Dendritic cell treated with granulocyte-macrophage colony-stimulating factor and Interleukin-4, amounts not matched to agents 40 ng/mL and 50 ng/mL, for 4 days (primary cell): ENCODE measurements at regions of chr10 and their contacts with region 1.

Region 1: GRCh38 chr10:71212318-71213126 is at the start of gene UNC5B:
- H3K4me3 Mint-ChIP-seq: peak within 1 kb of the TSS; percentile 76
- H3K27ac Mint-ChIP-seq: peak within 1 kb of the TSS; percentile 21
- H3K4me1 Mint-ChIP-seq: peaks cover 42% of the 10 kb centered on the region
- H3K27me3 Mint-ChIP-seq: peaks cover 77% of the 10 kb centered on the region

Region 2: DNA sequence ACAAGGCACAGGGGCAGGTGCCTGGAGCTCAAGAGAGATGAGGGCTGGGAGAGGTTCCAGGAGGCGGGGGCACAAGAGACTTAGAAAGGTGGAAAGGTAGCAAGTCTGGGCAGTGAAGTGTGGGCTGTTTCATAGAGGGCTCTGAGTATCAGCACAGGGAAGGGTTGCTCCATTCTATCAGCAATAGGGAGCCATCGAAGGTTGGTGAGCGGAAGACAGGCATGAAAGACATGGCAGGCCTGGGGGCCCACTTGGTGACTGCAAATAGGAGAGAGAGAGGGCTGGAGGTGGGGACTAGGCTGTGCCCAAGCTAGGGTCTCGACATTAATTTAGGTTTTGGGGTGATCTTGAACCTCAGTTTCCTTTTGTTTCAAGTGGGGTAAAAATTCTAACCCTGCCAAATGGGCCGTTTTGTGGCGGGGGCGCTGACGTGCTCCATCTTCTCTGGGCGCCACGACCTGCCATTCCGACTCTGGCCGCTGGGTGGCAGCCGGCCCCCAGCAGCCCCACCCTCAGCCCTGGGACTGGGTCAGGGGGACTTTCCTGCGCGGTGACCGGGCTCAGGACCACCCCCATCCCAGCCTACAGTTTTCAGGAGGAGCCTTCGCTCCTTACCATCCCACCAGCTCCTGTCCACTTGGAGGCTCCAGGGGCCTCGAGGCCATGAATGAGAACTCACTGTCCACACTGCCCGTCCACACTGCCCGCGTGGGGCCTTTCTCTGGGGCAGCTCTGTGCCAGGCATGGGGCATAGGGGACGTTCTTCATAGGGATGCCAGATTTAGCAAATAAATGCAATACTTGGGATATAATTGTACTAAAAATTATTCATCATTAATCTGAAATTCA is 286.9 kb before region 1 on chr10:
- intact Hi-C with region 1: loop called (anchors 2 kb)
- H3K4me3 Mint-ChIP-seq: no peak overlapping the region
- H3K27ac Mint-ChIP-seq: peak overlapping the region; percentile 13
- H3K4me1 Mint-ChIP-seq: peaks cover 15% of the 10 kb centered on the region
- H3K27me3 Mint-ChIP-seq: peaks cover 10% of the 10 kb centered on the region

Region 3: GRCh38 chr10:71234970-71235685 is 22.6 kb after region 1 on chr10:
- intact Hi-C with region 1: loop called (anchors 2 kb)
- H3K4me3 Mint-ChIP-seq: no peak overlapping the region
- H3K27ac Mint-ChIP-seq: peak overlapping the region; percentile 60
- H3K4me1 Mint-ChIP-seq: peaks cover 67% of the 10 kb centered on the region
- H3K27me3 Mint-ChIP-seq: peaks cover under 1% of the 10 kb centered on the region

Region 4: DNA sequence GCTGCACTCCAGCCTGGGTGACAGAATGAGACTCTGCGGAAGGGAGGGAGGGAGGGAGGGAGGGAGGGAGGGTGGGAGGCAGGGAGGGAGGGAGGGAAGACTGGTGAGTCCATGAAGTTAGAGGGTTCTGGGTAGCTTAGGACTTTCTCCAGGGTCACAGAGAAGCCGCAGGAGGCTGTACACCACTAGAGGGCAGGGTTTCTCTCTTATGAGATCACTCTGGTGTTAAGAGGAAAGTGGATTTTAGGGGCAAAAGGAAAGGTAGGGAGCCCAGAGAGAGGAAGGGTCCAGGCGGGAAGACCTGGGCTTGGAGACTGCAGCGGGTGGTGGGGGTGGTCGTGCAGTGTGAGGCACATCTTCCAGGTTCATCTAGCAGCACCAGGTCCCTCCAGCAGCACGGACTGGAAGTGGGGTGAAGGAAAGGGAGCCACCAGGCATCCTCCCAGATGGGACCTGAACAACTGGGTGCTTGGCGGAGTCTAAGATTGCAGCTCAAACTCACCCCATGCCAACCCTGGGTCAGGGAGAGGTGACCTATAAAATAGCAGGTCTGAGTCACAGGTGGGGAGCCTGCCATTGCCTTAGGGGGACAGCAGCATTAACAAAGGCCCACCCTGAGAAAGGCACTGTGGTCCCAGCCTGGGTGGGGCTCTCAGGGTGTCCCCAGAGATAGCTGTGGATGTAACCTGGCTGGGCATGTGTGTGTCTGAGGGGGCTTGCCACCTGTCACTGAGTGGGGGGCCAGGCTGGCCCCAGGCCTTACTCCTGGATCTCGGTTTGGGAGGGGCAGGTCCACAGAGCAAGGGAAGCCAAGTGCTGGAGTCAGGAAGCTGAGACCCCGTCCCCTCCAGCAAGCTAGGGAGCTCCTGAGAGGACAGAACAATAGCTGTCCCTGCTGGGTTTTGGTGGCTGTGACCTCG is 58.0 kb after region 1 on chr10:
- intact Hi-C with region 1: no loop called
- H3K4me3 Mint-ChIP-seq: no peak overlapping the region
- H3K27ac Mint-ChIP-seq: no peak overlapping the region
- H3K4me1 Mint-ChIP-seq: peaks cover 43% of the 10 kb centered on the region
- H3K27me3 Mint-ChIP-seq: peaks cover 8% of the 10 kb centered on the region